Activated CD4-positive, alpha-beta T cell treated with anti-CD3 and anti-CD28 coated beads for 36 hours (primary cell): ENCODE measurements at regions of chr12 and their contacts with region 1.

Region 1: DNA sequence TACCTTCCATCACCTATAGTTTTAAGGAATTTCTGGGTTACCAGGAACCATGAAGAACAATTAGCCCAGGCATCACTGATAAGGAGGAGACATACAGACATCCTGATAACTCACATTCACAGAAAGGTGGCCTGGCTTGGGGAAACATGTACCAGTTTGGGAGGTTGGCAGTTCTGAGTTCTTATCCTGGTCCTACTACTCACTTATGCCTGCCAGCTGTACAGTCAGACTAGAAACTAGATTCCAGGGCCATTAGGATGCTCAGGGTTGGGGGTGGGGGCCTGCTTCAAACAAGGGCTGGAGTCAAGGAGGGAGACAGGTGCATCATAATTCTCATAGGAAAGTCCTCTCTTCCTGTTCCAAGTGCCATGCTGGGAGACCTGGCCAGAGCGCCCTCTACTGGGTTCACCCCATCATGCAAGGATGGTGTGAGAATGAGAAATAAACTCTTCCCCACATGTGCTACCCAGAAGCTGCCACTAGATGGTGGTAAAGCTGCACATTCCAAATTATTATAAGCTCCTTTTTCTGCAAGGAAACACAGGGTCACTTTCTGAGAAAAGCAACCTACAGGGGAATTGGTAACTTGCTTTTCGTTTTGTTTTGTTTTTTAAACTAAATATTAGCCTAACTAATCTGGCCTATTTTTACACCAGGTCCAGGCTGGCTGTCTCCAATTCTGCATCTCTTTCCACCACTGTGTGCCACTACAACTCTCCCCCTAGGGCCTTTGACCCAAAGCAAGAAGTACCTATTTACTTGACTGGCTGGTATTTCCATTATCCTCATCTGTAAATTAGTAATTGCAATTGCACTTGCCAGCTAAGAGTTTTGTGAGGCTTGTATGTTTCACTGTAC is 14.5 kb downstream of the OAS2 start:
- DNase-seq: peak; percentile 82
- ATAC-seq: peak; percentile 63
- H3K4me3 Mint-ChIP-seq: no peak overlapping the region
- H3K27ac Mint-ChIP-seq: no peak overlapping the region
- H3K4me1 Mint-ChIP-seq: peaks cover 23% of the 10 kb centered on the region
- H3K27me3 Mint-ChIP-seq: no peaks in the 10 kb centered on the region

Region 2: DNA sequence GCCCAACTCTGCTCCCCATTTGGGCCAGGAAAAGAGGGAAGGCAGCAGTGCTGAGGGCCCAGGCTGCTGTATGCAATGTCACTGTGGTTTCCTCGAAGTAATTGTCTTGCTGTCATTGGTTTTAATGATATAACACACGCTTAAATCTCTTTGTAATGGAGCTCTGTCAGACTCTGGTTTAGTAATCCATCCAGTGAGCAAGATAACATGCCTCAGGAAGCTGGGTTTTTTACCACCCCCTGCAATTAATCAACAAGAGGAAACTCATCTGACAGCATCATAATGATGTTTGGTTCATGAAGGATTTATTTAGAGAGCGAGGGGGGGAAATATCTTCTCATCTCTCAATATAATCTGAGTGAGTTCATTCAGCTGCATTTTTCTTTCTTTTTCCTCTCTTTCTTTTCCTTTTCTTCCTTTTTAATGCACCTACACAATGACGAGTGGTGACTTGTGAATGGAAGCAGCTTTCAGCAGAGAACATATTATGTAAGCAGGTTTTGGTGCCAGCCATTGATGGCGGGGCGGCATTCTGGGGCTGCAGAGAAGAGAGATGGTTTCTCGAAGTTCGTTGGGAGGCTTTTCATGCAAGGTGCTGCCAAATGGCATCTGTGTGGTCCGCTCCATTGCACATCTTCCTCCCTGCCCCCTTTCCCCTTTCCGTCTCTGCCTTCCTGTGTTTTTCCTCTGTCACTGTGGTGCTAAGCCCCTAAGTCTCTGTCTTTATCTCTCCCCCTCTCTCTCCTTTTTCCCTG is 194.6 kb before region 1 on chr12:
- CTCF ChIA-PET with region 1: no interaction called
- POLR2A ChIA-PET with region 1: no interaction called
- intact Hi-C with region 1: no loop called
- DNase-seq: no peak
- ATAC-seq: no peak
- H3K4me3 Mint-ChIP-seq: no peak overlapping the region
- H3K27ac Mint-ChIP-seq: peak overlapping the region; percentile 20
- H3K4me1 Mint-ChIP-seq: peaks cover 2% of the 10 kb centered on the region
- H3K27me3 Mint-ChIP-seq: peaks cover 46% of the 10 kb centered on the region

Region 3: GRCh38 chr12:112900299-112901145 is 92.2 kb before region 1 on chr12:
- CTCF ChIA-PET with region 1: interaction called, 18 read pairs
- POLR2A ChIA-PET with region 1: no interaction called
- intact Hi-C with region 1: loop called in 1 of 2 experiments (anchors 5 kb)
- DNase-seq: peak; percentile 62
- ATAC-seq: peak; percentile 76
- H3K4me3 Mint-ChIP-seq: no peak overlapping the region
- H3K27ac Mint-ChIP-seq: no peak overlapping the region
- H3K4me1 Mint-ChIP-seq: peaks cover 19% of the 10 kb centered on the region
- H3K27me3 Mint-ChIP-seq: no peaks in the 10 kb centered on the region

Region 4: GRCh38 chr12:112978163-112979040 is 14.4 kb before region 1 on chr12 and contains the start of gene OAS2:
- CTCF ChIA-PET with region 1: interaction called, 106 read pairs
- POLR2A ChIA-PET with region 1: interaction called, 16 read pairs
- intact Hi-C with region 1: no loop called
- DNase-seq: peak; percentile 90
- ATAC-seq: peak; percentile 93
- H3K4me3 Mint-ChIP-seq: peak within 1 kb of the TSS; percentile 100
- H3K27ac Mint-ChIP-seq: peak within 1 kb of the TSS; percentile 100
- H3K4me1 Mint-ChIP-seq: peaks cover 44% of the 10 kb centered on the region
- H3K27me3 Mint-ChIP-seq: no peaks in the 10 kb centered on the region
- total RNA-seq, gene OAS2: 148 to 278 TPM

Region 5: DNA sequence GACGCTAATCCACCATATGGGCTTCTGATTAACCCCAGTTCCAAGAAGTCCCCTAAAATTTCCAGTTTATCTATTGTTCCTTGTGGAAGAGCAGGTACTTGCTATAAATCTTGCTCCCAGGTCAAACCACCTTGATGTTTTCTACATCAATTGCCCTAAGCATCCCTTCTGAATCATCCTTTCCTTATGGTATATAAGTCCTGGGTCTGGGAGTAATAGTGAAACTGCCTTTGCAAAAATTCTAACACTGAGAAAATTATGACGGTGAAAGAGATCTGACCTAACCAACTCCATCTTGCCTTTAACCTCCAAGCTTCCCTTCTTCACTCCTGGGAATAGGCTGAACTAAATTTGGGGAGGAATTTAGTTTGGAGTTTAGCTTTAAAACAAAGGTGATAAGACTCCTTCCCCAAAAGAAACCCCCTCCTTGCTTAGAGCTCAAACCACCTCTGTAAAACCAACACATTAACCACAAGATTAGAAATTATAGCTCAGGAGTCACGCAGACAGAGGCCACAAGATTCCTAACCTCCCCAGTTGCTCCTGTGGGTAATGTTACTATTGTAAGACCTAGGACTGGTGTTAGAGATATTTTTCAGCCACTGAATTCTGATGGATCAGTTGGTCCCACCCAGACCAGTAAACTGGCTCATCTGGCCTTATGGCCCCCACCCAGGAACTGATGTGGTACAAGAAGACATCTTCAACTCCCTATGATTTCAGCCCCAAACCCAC is 30.0 kb after region 1 on chr12:
- CTCF ChIA-PET with region 1: interaction called, 15 read pairs
- POLR2A ChIA-PET with region 1: no interaction called
- intact Hi-C with region 1: no loop called
- DNase-seq: no peak
- ATAC-seq: peak; percentile 87
- H3K4me3 Mint-ChIP-seq: no peak overlapping the region
- H3K27ac Mint-ChIP-seq: no peak overlapping the region
- H3K4me1 Mint-ChIP-seq: peaks cover 13% of the 10 kb centered on the region
- H3K27me3 Mint-ChIP-seq: no peaks in the 10 kb centered on the region

Region 6: DNA sequence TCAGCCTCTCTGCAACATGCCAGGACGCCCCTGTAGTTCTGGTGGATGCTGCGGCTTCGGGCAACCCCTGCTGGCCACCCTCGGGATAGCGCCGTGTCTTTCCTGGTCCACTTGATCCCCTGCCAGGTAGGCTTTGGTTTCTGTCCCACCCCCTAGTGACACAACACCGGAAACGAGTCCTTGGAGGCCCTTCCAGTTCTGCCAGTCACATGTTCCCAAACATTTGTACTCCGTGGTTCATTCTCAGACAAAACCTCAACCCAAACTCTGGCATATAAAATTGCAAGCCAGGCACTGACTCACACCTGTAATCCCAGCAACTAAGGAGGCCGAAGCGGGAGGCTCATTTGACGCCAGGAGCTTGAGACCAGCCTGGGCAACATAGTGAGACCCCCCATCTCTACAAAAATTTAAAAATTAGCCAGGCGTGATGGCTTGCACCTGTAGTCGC is 105.7 kb after region 1 on chr12:
- CTCF ChIA-PET with region 1: interaction called, 11 read pairs
- POLR2A ChIA-PET with region 1: no interaction called
- intact Hi-C with region 1: loop called (anchors 5 to 10 kb)
- DNase-seq: peak; percentile 88
- ATAC-seq: peak; percentile 89
- H3K4me3 Mint-ChIP-seq: no peak overlapping the region
- H3K27ac Mint-ChIP-seq: peak overlapping the region; percentile 70
- H3K4me1 Mint-ChIP-seq: peaks cover 21% of the 10 kb centered on the region
- H3K27me3 Mint-ChIP-seq: no peaks in the 10 kb centered on the region

Region 7: GRCh38 chr12:113174461-113175384 is 182.0 kb after region 1 on chr12:
- CTCF ChIA-PET with region 1: interaction called, 30 read pairs
- POLR2A ChIA-PET with region 1: no interaction called
- intact Hi-C with region 1: no loop called
- DNase-seq: peak; percentile 88
- ATAC-seq: peak; percentile 75
- H3K4me3 Mint-ChIP-seq: no peak overlapping the region
- H3K27ac Mint-ChIP-seq: no peak overlapping the region
- H3K4me1 Mint-ChIP-seq: peaks cover 2% of the 10 kb centered on the region
- H3K27me3 Mint-ChIP-seq: no peaks in the 10 kb centered on the region